Activated naive CD4-positive, alpha-beta T cell treated with anti-CD3 and anti-CD28 coated beads for 36 hours (primary cell): ENCODE measurements at regions of chr7 and their contacts with region 1.

Region 1: GRCh38 chr7:138008547-138009349 is 6.9 kb upstream of the CREB3L2 start:
- DNase-seq: peak; percentile 46
- H3K4me3 Mint-ChIP-seq: no peak overlapping the region
- H3K27ac Mint-ChIP-seq: no peak overlapping the region
- H3K4me1 Mint-ChIP-seq: peaks cover 2% of the 10 kb centered on the region
- H3K27me3 Mint-ChIP-seq: no peaks in the 10 kb centered on the region

Region 2: GRCh38 chr7:137606061-137606674 is 402.6 kb before region 1 on chr7:
- CTCF ChIA-PET with region 1: no interaction called
- intact Hi-C with region 1: loop called (anchors 2 kb)
- DNase-seq: no peak
- H3K4me3 Mint-ChIP-seq: no peak overlapping the region
- H3K27ac Mint-ChIP-seq: no peak overlapping the region
- H3K4me1 Mint-ChIP-seq: no peaks in the 10 kb centered on the region
- H3K27me3 Mint-ChIP-seq: peaks cover 5% of the 10 kb centered on the region

Region 3: GRCh38 chr7:137656227-137656849 is 352.4 kb before region 1 on chr7:
- CTCF ChIA-PET with region 1: interaction called, 17 read pairs
- intact Hi-C with region 1: loop called (anchors 1 kb)
- DNase-seq: peak; percentile 84
- H3K4me3 Mint-ChIP-seq: no peak overlapping the region
- H3K27ac Mint-ChIP-seq: no peak overlapping the region
- H3K4me1 Mint-ChIP-seq: no peaks in the 10 kb centered on the region
- H3K27me3 Mint-ChIP-seq: peaks cover 4% of the 10 kb centered on the region

Region 4: DNA sequence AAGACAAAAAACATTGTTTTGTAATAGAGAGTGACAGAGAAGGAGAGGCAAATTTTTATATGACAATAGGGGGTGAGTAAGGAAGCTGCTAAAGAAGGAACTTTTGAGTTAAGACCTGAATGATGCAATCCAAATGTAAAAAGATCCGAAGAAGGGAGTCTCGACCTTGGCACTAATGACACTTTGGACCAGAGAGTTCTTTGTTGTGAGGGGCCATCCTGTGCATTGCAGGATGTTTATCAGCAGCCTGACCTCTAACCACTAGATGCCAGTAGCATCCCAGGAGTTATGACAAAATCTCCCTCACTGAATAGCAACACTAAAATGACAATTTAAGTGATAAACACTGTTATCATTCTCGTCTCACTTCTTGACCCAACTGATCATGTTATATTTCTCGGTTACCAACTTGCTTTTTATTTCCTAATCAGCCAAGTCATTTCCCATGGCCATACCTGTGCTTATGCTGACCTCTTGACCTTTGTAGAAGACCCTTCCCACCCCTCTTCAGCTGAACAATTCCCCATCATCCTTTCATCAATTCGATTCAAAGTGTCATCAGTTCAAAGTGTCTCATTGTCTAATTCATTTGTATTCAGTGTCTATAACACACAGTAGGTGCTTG is 191.9 kb before region 1 on chr7:
- CTCF ChIA-PET with region 1: no interaction called
- intact Hi-C with region 1: loop called (anchors 5 kb)
- DNase-seq: peak; percentile 4
- H3K4me3 Mint-ChIP-seq: no peak overlapping the region
- H3K27ac Mint-ChIP-seq: no peak overlapping the region
- H3K4me1 Mint-ChIP-seq: no peaks in the 10 kb centered on the region
- H3K27me3 Mint-ChIP-seq: peaks cover 20% of the 10 kb centered on the region